ENCODE measurements at regions of chr15 and their contacts with region 1.

Region 1: GRCh38 chr15:77543159-77543882 is 89.4 kb downstream of the LINGO1 start:
- DNase-seq: peak; percentile 78
- ATAC-seq: peak; percentile 89
- H3K4me3 ChIP-seq: peak overlapping the region; percentile 11; the same call in 1 of the 2 replicates
- H3K27ac ChIP-seq: peak overlapping the region; percentile 25; the same call in 1 of the 2 replicates
- H3K4me1 ChIP-seq: peaks cover 18% of the 10 kb centered on the region
- H3K27me3 ChIP-seq: no peaks in the 10 kb centered on the region
- CTCF ChIP-seq: peak; percentile 99
- POLR2A ChIP-seq: no peak
- RAD21 ChIP-seq: peak; percentile 99

Region 2: DNA sequence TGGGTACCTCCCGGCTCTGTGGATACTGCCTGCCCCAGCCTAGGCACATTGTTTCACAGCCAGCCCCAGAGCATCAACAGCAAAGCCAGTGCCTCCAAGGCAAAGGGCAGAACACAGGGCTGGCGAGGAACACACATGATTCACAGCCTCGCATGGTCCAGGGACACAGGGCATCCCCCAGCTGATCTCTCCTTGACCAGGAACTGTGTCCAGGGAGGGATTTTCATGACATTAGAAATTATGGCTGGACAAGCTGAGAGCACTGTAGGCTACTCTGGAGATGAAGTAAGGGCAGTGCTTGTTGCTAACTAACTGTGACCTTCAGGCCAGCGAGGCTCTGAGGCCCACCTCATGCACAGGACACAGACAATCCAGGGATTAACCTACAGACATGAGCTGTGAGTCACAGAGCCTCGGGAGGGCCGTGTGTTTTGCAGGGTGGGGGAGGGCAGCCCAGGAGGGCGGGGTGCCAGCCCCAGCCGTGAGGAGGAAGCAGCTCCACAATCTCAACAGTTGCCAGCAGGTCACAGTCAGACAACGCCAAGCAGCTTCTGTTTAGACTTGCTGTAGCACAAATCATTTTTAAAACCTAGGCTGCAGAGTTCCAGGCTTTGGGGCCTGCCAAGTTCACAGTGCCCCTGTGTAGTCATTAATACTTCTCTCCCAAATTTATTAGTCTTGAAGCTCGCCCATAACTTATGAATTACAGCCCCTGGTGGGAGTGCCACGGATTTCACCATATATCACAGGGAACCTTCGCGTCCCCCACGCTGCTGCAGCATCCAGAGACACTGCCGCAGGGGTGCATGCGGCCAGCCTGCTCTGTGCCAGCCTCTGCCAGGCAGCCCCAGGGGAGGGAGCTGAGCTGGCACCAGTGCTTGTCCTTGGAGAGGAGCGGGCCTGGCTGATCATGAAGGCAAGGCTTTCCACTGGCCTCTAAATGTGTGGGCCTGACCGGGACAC is 1346.8 kb before region 1 on chr15:
- CTCF ChIA-PET with region 1: no interaction called
- POLR2A ChIA-PET with region 1: no interaction called
- dilution Hi-C with region 1: no loop called
- in situ Hi-C with region 1: no loop called
- intact Hi-C with region 1: loop called (anchors 2 kb)
- DNase-seq: peak; percentile 89
- ATAC-seq: peak; percentile 88
- H3K4me3 ChIP-seq: no peak overlapping the region
- H3K27ac ChIP-seq: peak overlapping the region; percentile 31; the same call in 1 of the 2 replicates
- H3K4me1 ChIP-seq: peaks cover 25% of the 10 kb centered on the region
- H3K27me3 ChIP-seq: no peaks in the 10 kb centered on the region
- CTCF ChIP-seq: no peak
- POLR2A ChIP-seq: no peak
- RAD21 ChIP-seq: no peak

Region 3: GRCh38 chr15:77024271-77025082 is 518.8 kb before region 1 on chr15:
- CTCF ChIA-PET with region 1: interaction called, 6 read pairs
- POLR2A ChIA-PET with region 1: no interaction called
- dilution Hi-C with region 1: no loop called
- in situ Hi-C with region 1: loop called (anchors 10 kb)
- intact Hi-C with region 1: loop called (anchors 1 kb)
- DNase-seq: peak; percentile 27
- ATAC-seq: peak; percentile 74
- H3K4me3 ChIP-seq: no peak overlapping the region
- H3K27ac ChIP-seq: no peak overlapping the region
- H3K4me1 ChIP-seq: peaks cover 12% of the 10 kb centered on the region
- H3K27me3 ChIP-seq: no peaks in the 10 kb centered on the region; the same call in 1 of the 2 replicates
- CTCF ChIP-seq: peak; percentile 87
- POLR2A ChIP-seq: no peak
- RAD21 ChIP-seq: peak; percentile 81

Region 4: GRCh38 chr15:77186594-77187011 is 356.7 kb before region 1 on chr15:
- CTCF ChIA-PET with region 1: interaction called, 10 read pairs
- POLR2A ChIA-PET with region 1: no interaction called
- dilution Hi-C with region 1: no loop called
- in situ Hi-C with region 1: no loop called
- intact Hi-C with region 1: loop called (anchors 1 kb)
- DNase-seq: peak; percentile 47
- ATAC-seq: peak; percentile 55; the same call in 1 of the 2 replicates
- H3K4me3 ChIP-seq: no peak overlapping the region
- H3K27ac ChIP-seq: no peak overlapping the region
- H3K4me1 ChIP-seq: peaks cover 3% of the 10 kb centered on the region
- H3K27me3 ChIP-seq: no peaks in the 10 kb centered on the region
- CTCF ChIP-seq: peak; percentile 62
- POLR2A ChIP-seq: no peak
- RAD21 ChIP-seq: peak; percentile 66

Region 5: GRCh38 chr15:77440378-77440999 is 102.8 kb before region 1 on chr15:
- CTCF ChIA-PET with region 1: no interaction called
- POLR2A ChIA-PET with region 1: no interaction called
- dilution Hi-C with region 1: no loop called
- in situ Hi-C with region 1: no loop called
- intact Hi-C with region 1: no loop called
- DNase-seq: peak; percentile 70
- ATAC-seq: peak; percentile 90
- H3K4me3 ChIP-seq: no peak overlapping the region
- H3K27ac ChIP-seq: no peak overlapping the region
- H3K4me1 ChIP-seq: 0 out of 2 replicates have a peak, but pooled peaks cover 2% of the 10 kb centered on the region
- H3K27me3 ChIP-seq: no peaks in the 10 kb centered on the region
- CTCF ChIP-seq: no peak
- POLR2A ChIP-seq: no peak
- RAD21 ChIP-seq: no peak; the same call in 1 of the 2 replicates

Region 6: GRCh38 chr15:78149805-78150751 is 606.8 kb after region 1 on chr15:
- CTCF ChIA-PET with region 1: no interaction called
- POLR2A ChIA-PET with region 1: no interaction called
- dilution Hi-C with region 1: no loop called
- in situ Hi-C with region 1: no loop called
- intact Hi-C with region 1: no loop called
- DNase-seq: no peak
- ATAC-seq: no peak
- H3K4me3 ChIP-seq: peak overlapping the region; percentile 57
- H3K27ac ChIP-seq: peak overlapping the region; percentile 9; the same call in 1 of the 2 replicates
- H3K4me1 ChIP-seq: peaks cover 5% of the 10 kb centered on the region
- H3K27me3 ChIP-seq: no peaks in the 10 kb centered on the region
- CTCF ChIP-seq: no peak
- POLR2A ChIP-seq: no peak
- RAD21 ChIP-seq: no peak

Measured in IMR-90 (cell line).